PC-9 (cell line): ENCODE measurements at regions of chr12 and their contacts with region 1.

Region 1: DNA sequence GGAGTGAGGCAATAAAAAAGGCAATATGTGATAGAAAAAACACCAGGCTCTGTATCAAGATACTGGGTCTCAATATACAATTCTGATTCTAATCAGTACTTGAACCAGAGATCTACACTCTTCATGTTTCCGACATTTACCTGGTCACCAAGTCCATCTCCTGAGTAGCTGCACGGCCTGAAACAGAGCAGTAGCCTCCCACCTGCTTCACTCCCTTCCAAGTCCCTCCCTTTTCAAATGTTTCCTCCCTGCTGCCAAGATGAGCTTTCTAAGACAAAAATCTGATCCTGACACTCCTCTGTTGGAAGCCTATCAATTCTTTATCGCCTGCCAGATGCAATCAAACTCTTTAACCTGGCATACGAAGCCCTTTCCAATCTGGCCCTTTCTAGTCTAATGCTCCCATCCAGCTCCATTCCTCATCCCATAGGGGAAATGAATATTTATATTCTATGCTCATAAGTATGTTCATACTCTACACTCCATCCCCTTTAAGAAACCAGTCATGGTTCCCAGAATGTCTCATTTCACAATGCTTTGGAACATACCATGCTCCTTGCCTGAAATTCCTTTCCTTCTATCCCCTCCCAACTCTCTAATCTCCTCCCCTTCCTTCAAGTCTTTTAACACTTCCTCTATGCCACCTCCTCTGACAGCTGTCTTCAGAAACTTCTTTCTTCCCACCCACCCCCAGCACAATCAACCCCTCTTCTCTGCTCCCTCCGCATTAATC is 207.1 kb upstream of the CAND1 start:
- DNase-seq: no peak
- H3K4me3 ChIP-seq: no peak overlapping the region
- H3K27ac ChIP-seq: no peak overlapping the region
- H3K4me1 ChIP-seq: peaks cover 6% of the 10 kb centered on the region
- H3K27me3 ChIP-seq: no peaks in the 10 kb centered on the region
- CTCF ChIP-seq: no peak

Region 2: GRCh38 chr12:67042697-67043131 is 19.3 kb before region 1 on chr12:
- CTCF ChIA-PET with region 1: interaction called, 14 read pairs
- POLR2A ChIA-PET with region 1: no interaction called
- intact Hi-C with region 1: no loop called
- DNase-seq: peak; percentile 11 to 57
- H3K4me3 ChIP-seq: no peak overlapping the region
- H3K27ac ChIP-seq: no peak overlapping the region
- H3K4me1 ChIP-seq: peaks cover 30% of the 10 kb centered on the region
- H3K27me3 ChIP-seq: no peaks in the 10 kb centered on the region
- CTCF ChIP-seq: no peak